T-cell (primary cell): ENCODE measurements at regions of chr3 and their contacts with region 1.

Region 1: GRCh38 chr3:16866571-16866970 is 18.2 kb upstream of the PLCL2 start:
- DNase-seq: peak in 3 of 35 experiments; percentile 6 to 39 (median 19)
- ATAC-seq: peak in 3 of 4 experiments; percentile 57 to 70 (median 61)
- H3K4me3 ChIP-seq: no peak overlapping the region
- H3K4me3 Mint-ChIP-seq: no peak overlapping the region
- H3K27ac ChIP-seq: no peak overlapping the region
- H3K27ac Mint-ChIP-seq: no peak overlapping the region
- H3K4me1 ChIP-seq: peaks cover 5 to 8% of the 10 kb centered on the region in 2 experiments
- H3K4me1 Mint-ChIP-seq: peaks cover 12 to 14% (median 14%) of the 10 kb centered on the region in 3 donors
- H3K27me3 ChIP-seq: no peaks in the 10 kb centered on the region
- H3K27me3 Mint-ChIP-seq: no peaks in the 10 kb centered on the region

Region 2: GRCh38 chr3:16849229-16849628 is 17.3 kb before region 1 on chr3:
- CTCF ChIA-PET with region 1: interaction called in 1 of 2 experiments, 4 read pairs
- POLR2A ChIA-PET with region 1: interaction called, 3 to 10 read pairs
- DNase-seq: peak in 33 of 35 experiments; percentile 39 to 82 (median 68)
- ATAC-seq: peak; percentile 75 to 99 (median 92)
- H3K4me3 ChIP-seq: peak overlapping the region in 1 of 2 donors; percentile 27
- H3K4me3 Mint-ChIP-seq: peak overlapping the region; percentile 63 to 66 (median 65)
- H3K27ac ChIP-seq: peak overlapping the region; percentile 58
- H3K27ac Mint-ChIP-seq: peak overlapping the region; percentile 86 to 88
- H3K4me1 ChIP-seq: peaks cover 14 to 40% of the 10 kb centered on the region in 2 experiments
- H3K4me1 Mint-ChIP-seq: peaks cover 47 to 55% (median 52%) of the 10 kb centered on the region in 3 donors
- H3K27me3 ChIP-seq: no peaks in the 10 kb centered on the region
- H3K27me3 Mint-ChIP-seq: no peaks in the 10 kb centered on the region

Region 3: DNA sequence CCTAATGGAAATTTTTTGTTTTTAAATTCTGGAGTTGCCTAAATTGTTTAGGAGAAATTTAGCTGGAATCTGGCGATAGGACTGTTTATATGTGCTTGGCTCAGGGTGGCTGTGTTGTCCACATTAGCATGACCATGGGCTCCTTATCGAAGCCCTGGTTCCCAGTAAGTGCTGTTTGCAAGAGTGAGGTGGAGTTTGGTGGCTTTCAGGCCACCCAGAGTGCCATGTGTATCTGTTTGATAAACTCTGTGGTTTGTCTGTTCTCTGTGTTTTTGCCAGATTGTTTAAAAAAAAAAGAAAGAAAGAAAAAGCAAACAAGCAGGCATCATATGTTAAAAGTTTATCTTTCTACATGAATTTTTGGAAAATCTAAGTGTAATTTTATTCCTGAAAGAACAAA is 69.7 kb after region 1 on chr3:
- CTCF ChIA-PET with region 1: no interaction called
- POLR2A ChIA-PET with region 1: no interaction called
- DNase-seq: peak in 29 of 35 experiments; percentile 1 to 53 (median 16)
- ATAC-seq: peak; percentile 48 to 90 (median 80)
- H3K4me3 ChIP-seq: no peak overlapping the region
- H3K4me3 Mint-ChIP-seq: peak overlapping the region; percentile 34 to 58 (median 54)
- H3K27ac ChIP-seq: no peak overlapping the region
- H3K27ac Mint-ChIP-seq: peak overlapping the region; percentile 80 to 84
- H3K4me1 ChIP-seq: peaks cover 23 to 42% of the 10 kb centered on the region in 2 experiments
- H3K4me1 Mint-ChIP-seq: peaks cover 96 to 99% (median 98%) of the 10 kb centered on the region in 3 donors
- H3K27me3 ChIP-seq: no peaks in the 10 kb centered on the region
- H3K27me3 Mint-ChIP-seq: no peaks in the 10 kb centered on the region